Mucosa of descending colon (tissue), 3 donors: ENCODE measurements at regions of chr18 and their contacts with region 1.

Region 1: GRCh38 chr18:13216092-13216582 is 2.4 kb upstream of the LDLRAD4 start:
- DNase-seq: peak; percentile 87 to 90 (median 89)
- ATAC-seq: peak; percentile 79
- H3K4me3 ChIP-seq: no peak overlapping the region
- H3K4me1 ChIP-seq: peaks cover 35% of the 10 kb centered on the region
- CTCF ChIP-seq: peak; percentile 55

Region 2: GRCh38 chr18:13447626-13448334 is 231.6 kb after region 1 on chr18:
- intact Hi-C with region 1: no loop called
- DNase-seq: no peak
- ATAC-seq: peak; percentile 18
- H3K4me3 ChIP-seq: no peak overlapping the region
- H3K4me1 ChIP-seq: peaks cover 6% of the 10 kb centered on the region
- CTCF ChIP-seq: no peak

Region 3: GRCh38 chr18:13530879-13531387 is 314.8 kb after region 1 on chr18:
- intact Hi-C with region 1: loop called (anchors 5 to 10 kb)
- DNase-seq: peak in 2 of 3 donors; percentile 67 to 75
- ATAC-seq: peak; percentile 87
- H3K4me3 ChIP-seq: no peak overlapping the region
- H3K4me1 ChIP-seq: no peaks in the 10 kb centered on the region
- CTCF ChIP-seq: no peak

Region 4: DNA sequence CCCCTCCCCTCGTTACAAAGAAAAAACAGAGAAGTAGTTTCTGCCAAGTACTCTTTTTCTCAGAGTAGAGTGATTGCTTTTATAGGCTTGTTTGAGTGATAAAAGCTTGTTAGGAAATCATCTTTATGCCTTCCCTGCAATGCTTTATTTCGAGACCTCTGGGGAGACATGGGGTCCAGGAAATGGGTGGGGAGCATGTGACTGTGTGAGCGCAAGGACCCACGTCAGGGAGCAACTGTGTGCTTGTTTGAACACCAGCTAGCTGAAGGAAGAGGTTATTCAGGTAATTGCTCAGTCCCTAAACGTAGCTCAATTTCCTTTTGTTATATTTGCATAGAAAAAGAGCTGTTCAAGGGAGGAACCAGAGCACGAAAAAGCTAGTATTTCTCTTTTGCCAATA is 322.9 kb after region 1 on chr18:
- intact Hi-C with region 1: loop called (anchors 5 to 10 kb)
- DNase-seq: peak; percentile 55 to 67 (median 67)
- ATAC-seq: peak; percentile 80
- H3K4me3 ChIP-seq: no peak overlapping the region
- H3K4me1 ChIP-seq: peaks cover 33% of the 10 kb centered on the region
- CTCF ChIP-seq: no peak

Region 5: GRCh38 chr18:13629841-13630715 is 413.9 kb after region 1 on chr18:
- intact Hi-C with region 1: loop called in 1 of 2 experiments (anchors 5 kb)
- DNase-seq: peak in 1 of 3 donors; percentile 61
- ATAC-seq: peak; percentile 82
- H3K4me3 ChIP-seq: no peak overlapping the region
- H3K4me1 ChIP-seq: no peaks in the 10 kb centered on the region
- CTCF ChIP-seq: peak; percentile 17